ENCODE measurements at regions of chr13 and their contacts with region 1.

Region 1: DNA sequence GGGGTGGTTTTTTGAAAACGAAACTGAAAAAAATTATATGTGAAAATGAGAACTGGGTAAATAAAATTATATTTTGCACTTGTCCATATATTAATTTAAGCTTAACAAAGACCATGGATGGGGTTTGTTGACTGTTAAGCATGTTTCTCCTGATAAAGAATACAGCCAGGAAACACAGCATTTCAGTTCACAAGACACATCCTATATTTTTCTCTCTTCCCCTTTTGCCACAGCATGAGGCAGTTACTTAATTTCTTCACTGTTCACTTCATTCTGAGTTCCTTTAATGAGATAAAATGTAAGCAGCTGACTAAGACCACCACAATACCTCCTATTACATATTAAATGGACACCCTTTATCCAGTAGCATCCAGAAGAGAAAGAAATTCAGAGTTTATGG is 64.0 kb downstream of the RXFP2 start:
- DNase-seq: no peak
- ATAC-seq: no peak
- H3K4me3 ChIP-seq: no peak overlapping the region
- H3K27ac ChIP-seq: no peak overlapping the region
- H3K4me1 ChIP-seq: no peaks in the 10 kb centered on the region
- H3K27me3 ChIP-seq: no peaks in the 10 kb centered on the region

Region 2: GRCh38 chr13:31236211-31236786 is 567.0 kb before region 1 on chr13:
- intact Hi-C with region 1: loop called in 1 of 2 experiments (anchors 5 kb)
- DNase-seq: no peak
- ATAC-seq: peak; percentile 54
- H3K4me3 ChIP-seq: no peak overlapping the region
- H3K27ac ChIP-seq: no peak overlapping the region
- H3K4me1 ChIP-seq: no peaks in the 10 kb centered on the region
- H3K27me3 ChIP-seq: no peaks in the 10 kb centered on the region

Region 3: DNA sequence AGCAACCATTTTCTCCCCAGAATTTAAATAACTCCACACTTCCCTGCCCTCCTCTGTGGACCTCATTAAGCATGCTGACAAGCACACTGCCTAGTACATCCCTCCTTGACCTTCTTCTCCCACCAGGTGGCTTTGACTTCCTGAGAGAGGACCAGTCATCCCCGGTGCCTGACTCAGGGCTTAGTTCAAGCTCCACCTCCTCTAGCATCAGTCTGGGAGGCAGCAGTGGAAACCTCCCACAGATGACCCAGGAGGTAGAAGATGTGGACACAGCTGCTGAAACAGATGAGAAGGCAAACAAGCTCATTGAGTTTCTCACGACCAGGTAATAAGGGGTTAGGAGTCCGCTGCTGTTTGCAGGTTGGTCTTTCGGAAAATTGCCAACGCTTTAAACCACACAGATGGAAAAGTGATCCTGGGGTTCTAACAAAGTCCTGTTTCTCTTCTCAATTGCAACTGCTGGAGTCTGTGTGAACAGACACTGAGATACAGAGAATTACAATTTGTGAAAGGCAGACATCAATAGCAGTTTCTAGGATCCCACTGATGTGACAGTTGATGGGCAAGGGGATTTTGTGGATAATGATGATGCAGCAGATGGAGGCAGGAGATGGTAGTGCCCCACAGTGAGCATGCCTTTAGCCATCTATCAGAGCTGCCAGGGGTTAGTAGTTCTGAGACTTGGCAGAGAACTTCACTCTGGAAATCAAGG is 425.2 kb after region 1 on chr13:
- intact Hi-C with region 1: loop called in 1 of 2 experiments (anchors 5 kb)
- DNase-seq: no peak
- ATAC-seq: no peak
- H3K4me3 ChIP-seq: no peak overlapping the region
- H3K27ac ChIP-seq: no peak overlapping the region
- H3K4me1 ChIP-seq: peaks cover 1 to 3% of the 10 kb centered on the region in 2 donors
- H3K27me3 ChIP-seq: no peaks in the 10 kb centered on the region

Measured in aorta (tissue), 5 donors.